ENCODE measurements at regions of chr2 and their contacts with region 1.

Region 1: GRCh38 chr2:43576981-43577892 is 18.6 kb downstream of the THADA start:
- DNase-seq: peak; percentile 33
- H3K4me3 ChIP-seq: no peak overlapping the region
- CTCF ChIP-seq: peak; percentile 58

Region 2: DNA sequence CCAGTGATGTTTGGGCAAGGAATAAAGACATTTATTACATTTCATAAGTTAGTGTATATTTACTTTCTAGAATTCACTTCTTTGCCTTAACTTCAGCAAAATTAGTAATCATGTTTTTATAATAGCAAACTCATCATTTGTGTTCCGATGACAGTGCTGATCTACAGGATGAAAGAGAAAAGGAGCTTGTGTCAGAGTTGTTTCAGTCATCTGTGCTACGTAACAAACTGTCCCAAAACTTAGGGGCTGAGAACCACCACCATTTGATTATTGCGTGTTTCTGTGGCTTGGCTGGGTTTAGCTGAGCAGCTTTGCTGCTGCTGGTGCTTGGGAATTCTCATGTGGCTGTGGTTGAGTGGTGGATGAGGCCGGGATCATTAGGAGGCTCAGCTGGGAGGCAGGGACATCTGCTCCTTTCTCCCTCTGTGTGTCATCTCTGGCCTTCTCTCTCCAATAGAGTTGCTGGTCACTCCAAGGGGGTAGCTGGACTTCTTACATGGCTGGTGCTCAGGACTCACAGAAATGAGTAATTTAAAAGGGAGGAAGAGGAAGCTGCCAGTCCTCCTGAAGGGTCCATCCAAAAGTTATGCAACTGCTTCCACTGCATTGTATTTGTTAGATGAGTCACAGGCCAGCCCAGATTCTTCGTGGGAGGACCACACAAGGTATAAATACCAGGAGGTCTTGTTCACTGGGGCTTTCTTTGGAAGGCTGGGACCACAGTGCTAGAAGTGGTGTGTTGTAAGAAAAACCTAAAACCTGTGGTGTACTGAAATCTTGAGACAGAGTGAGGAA is 741.5 kb before region 1 on chr2:
- CTCF ChIA-PET with region 1: interaction called, 14 read pairs
- POLR2A ChIA-PET with region 1: no interaction called
- DNase-seq: peak; percentile 94
- H3K4me3 ChIP-seq: no peak overlapping the region
- CTCF ChIP-seq: no peak

Region 3: GRCh38 chr2:43513216-43513615 is 64.0 kb before region 1 on chr2:
- CTCF ChIA-PET with region 1: no interaction called
- POLR2A ChIA-PET with region 1: no interaction called
- DNase-seq: no peak
- H3K4me3 ChIP-seq: no peak overlapping the region
- CTCF ChIP-seq: no peak

Region 4: GRCh38 chr2:43559391-43560230 is 17.6 kb before region 1 on chr2:
- CTCF ChIA-PET with region 1: interaction called, 88 read pairs
- POLR2A ChIA-PET with region 1: no interaction called
- DNase-seq: no peak
- H3K4me3 ChIP-seq: no peak overlapping the region
- CTCF ChIP-seq: no peak

Region 5: GRCh38 chr2:43566461-43566729 is 10.8 kb before region 1 on chr2:
- CTCF ChIA-PET with region 1: interaction called, 88 read pairs
- POLR2A ChIA-PET with region 1: no interaction called
- DNase-seq: no peak
- H3K4me3 ChIP-seq: no peak overlapping the region
- CTCF ChIP-seq: no peak

Region 6: GRCh38 chr2:43595603-43596412 is 18.6 kb after region 1 on chr2 and contains the start of gene THADA:
- CTCF ChIA-PET with region 1: interaction called, 17 read pairs
- POLR2A ChIA-PET with region 1: no interaction called
- DNase-seq: peak; percentile 92
- H3K4me3 ChIP-seq: peak within 1 kb of the TSS; percentile 94
- CTCF ChIP-seq: no peak

Measured in AG04449 (cell line).